CD8-positive, alpha-beta T cell (primary cell): ENCODE measurements at regions of chr14 and their contacts with region 1.

Region 1: GRCh38 chr14:77654001-77654441 is 37.6 kb upstream of the SPTLC2 start:
- DNase-seq: no peak
- ATAC-seq: no peak
- H3K4me3 ChIP-seq: no peak overlapping the region
- H3K4me3 Mint-ChIP-seq: no peak overlapping the region
- H3K27ac ChIP-seq: no peak overlapping the region
- H3K27ac Mint-ChIP-seq: peak overlapping the region; percentile 43
- H3K4me1 ChIP-seq: no peaks in the 10 kb centered on the region
- H3K4me1 Mint-ChIP-seq: peaks cover 2% of the 10 kb centered on the region
- H3K27me3 ChIP-seq: no peaks in the 10 kb centered on the region
- H3K27me3 Mint-ChIP-seq: no peaks in the 10 kb centered on the region
- CTCF ChIP-seq: no peak

Region 2: DNA sequence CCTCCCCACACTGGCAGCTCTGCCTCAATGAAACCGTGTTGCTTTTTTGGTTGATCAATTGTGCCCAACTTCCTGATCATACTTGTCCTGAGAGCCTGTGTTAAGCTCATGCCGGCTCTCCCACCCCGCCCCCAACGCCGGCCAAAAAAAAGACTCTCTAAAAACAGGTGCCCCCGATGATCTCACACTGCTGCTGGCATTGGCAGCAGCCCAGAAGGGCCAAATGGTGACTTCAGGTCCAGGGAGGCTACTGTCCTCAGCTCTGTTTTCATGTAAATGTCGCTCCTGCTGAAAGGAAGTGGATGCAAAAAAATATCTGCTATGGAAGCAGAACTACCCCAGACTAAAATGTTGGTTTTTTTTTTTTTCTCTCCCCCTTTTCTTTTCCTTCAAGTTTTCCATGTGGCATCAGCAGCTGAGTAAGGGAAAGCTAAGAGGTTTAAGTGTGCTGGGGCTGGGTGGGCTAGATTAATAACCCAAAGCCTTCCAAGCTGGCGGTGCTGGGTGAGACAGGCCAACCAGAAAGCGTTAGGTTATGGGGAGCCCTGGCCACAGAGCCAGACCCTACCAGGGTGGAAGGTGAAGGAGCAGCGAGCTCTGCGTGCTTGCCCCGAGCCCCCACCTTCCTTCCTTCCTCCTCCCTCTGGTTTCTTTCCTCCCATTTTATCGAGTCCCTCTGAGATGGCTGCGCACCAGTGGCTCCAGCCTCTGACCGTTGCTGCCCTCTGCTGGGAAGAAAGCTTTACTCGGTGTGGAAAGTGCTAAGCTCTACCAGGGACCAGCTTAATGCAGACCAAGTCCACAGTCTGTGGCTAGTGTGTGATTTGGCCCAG is 912.2 kb after region 1 on chr14:
- CTCF ChIA-PET with region 1: no interaction called
- POLR2A ChIA-PET with region 1: no interaction called
- intact Hi-C with region 1: loop called in 1 of 2 experiments (anchors 10 kb)
- DNase-seq: peak in 8 of 9 experiments; percentile 23 to 59 (median 46)
- ATAC-seq: peak; percentile 44
- H3K4me3 ChIP-seq: no peak overlapping the region
- H3K4me3 Mint-ChIP-seq: peak overlapping the region; percentile 30
- H3K27ac ChIP-seq: no peak overlapping the region
- H3K27ac Mint-ChIP-seq: no peak overlapping the region
- H3K4me1 ChIP-seq: no peaks in the 10 kb centered on the region
- H3K4me1 Mint-ChIP-seq: peaks cover 3% of the 10 kb centered on the region
- H3K27me3 ChIP-seq: no peaks in the 10 kb centered on the region
- H3K27me3 Mint-ChIP-seq: no peaks in the 10 kb centered on the region
- CTCF ChIP-seq: peak; percentile 40

Region 3: DNA sequence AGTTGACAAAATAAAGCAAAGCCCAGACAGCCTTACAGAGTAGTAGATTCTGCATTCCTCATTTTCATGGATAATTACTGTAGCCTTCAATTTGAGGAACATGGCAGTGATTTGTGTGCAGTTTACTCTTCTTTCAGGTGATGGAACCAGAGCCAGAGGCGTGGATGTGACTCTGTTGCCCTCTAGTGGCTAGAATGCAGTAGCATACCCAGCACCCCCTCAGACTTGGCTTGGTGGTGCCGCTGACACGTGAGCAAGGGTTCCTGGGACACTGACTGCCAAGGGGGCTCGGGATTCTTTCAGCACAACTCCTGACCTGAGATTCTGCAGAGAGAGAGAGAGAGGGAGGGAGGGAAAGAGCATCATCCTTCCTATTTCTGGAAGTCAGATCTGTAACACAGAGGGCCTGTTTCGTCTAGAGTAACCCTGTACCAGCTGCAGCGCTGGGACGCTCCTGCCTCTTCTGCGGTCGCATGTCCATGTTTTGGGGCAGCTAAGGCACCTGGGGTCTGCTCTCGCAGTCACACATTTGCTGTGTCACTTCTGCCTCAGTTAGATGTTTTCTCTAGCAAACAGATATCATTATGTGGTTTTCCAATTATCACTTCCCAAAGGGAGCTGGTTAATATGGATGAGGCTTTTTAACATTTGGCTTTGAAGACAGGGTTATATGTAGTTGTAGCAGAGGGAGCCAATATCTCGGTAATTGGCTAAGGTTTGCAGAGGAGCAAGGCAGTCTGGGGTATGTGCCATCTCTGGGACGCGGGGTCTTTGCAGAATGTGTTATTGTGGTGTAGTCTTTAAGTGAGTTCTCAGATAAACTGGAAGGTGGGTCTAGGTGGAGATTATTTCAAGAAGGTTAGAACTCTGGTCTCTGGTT is 944.3 kb after region 1 on chr14:
- CTCF ChIA-PET with region 1: interaction called, 3 read pairs
- POLR2A ChIA-PET with region 1: no interaction called
- intact Hi-C with region 1: loop called in 1 of 2 experiments (anchors 10 kb)
- DNase-seq: peak in 8 of 9 experiments; percentile 1 to 52 (median 25)
- ATAC-seq: no peak
- H3K4me3 ChIP-seq: no peak overlapping the region
- H3K4me3 Mint-ChIP-seq: no peak overlapping the region
- H3K27ac ChIP-seq: no peak overlapping the region
- H3K27ac Mint-ChIP-seq: no peak overlapping the region
- H3K4me1 ChIP-seq: no peaks in the 10 kb centered on the region
- H3K4me1 Mint-ChIP-seq: no peaks in the 10 kb centered on the region
- H3K27me3 ChIP-seq: no peaks in the 10 kb centered on the region
- H3K27me3 Mint-ChIP-seq: peaks cover 1% of the 10 kb centered on the region
- CTCF ChIP-seq: peak; percentile 55